RWPE1 (cell line): ENCODE measurements at regions of chr5 and their contacts with region 1.

Region 1: GRCh38 chr5:177478711-177479646 is 5.5 kb upstream of the DBN1 start:
- DNase-seq: no peak
- H3K27ac ChIP-seq: peak overlapping the region; percentile 82
- CTCF ChIP-seq: no peak

Region 2: GRCh38 chr5:177071666-177072385 is 407.2 kb before region 1 on chr5:
- CTCF ChIA-PET with region 1: no interaction called
- POLR2A ChIA-PET with region 1: no interaction called
- DNase-seq: peak; percentile 71
- H3K27ac ChIP-seq: no peak overlapping the region
- CTCF ChIP-seq: peak; percentile 97

Region 3: DNA sequence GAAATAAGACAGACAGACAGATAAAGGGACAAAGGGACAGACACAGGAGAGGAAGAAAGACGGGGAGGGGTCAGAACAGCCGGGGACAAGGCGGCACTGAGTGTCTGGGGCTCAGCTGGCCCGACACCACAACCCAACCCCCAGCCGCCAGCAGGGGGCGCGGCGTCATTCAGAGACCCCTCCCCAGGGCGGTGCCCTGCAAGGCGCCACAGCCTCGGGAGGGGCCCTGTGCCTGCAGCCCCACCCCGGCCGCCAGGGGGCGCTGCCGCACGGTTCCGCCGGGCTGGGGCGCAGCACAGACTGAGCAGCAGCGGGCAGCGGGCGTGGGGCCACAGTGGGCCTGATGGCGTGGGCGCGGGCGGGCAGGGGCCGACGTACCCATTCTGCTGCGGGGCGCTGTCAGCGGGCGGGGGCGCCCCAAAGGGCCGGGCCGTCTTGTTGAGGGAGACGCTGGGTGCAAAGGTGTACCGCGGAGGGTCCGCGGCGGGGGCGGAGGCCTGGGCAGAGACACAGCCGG is 12.5 kb after region 1 on chr5:
- CTCF ChIA-PET with region 1: interaction called, 14 read pairs
- POLR2A ChIA-PET with region 1: interaction called, 3 read pairs
- DNase-seq: no peak
- H3K27ac ChIP-seq: peak overlapping the region; percentile 96
- CTCF ChIP-seq: peak; percentile 96